ENCODE measurements at regions of chr10 and their contacts with region 1.

Region 1: GRCh38 chr10:8331883-8332729 is 277.6 kb downstream of the GATA3 start:
- DNase-seq: peak; percentile 41
- ATAC-seq: peak; percentile 62
- H3K4me3 ChIP-seq: peak overlapping the region; percentile 58
- H3K27ac ChIP-seq: no peak overlapping the region
- H3K4me1 ChIP-seq: no peaks in the 10 kb centered on the region
- H3K27me3 ChIP-seq: peaks cover 23% of the 10 kb centered on the region
- CTCF ChIP-seq: no peak

Region 2: GRCh38 chr10:8350351-8350967 is 18.4 kb after region 1 on chr10:
- CTCF ChIA-PET with region 1: interaction called, 10 read pairs
- POLR2A ChIA-PET with region 1: no interaction called
- intact Hi-C with region 1: no loop called
- DNase-seq: peak; percentile 2
- ATAC-seq: no peak
- H3K4me3 ChIP-seq: no peak overlapping the region
- H3K27ac ChIP-seq: no peak overlapping the region
- H3K4me1 ChIP-seq: no peaks in the 10 kb centered on the region
- H3K27me3 ChIP-seq: no peaks in the 10 kb centered on the region
- CTCF ChIP-seq: no peak

Region 3: GRCh38 chr10:8473205-8473604 is 141.1 kb after region 1 on chr10:
- CTCF ChIA-PET with region 1: no interaction called
- POLR2A ChIA-PET with region 1: no interaction called
- intact Hi-C with region 1: loop called (anchors 10 kb)
- DNase-seq: peak; percentile 34
- ATAC-seq: no peak
- H3K4me3 ChIP-seq: no peak overlapping the region
- H3K27ac ChIP-seq: no peak overlapping the region
- H3K4me1 ChIP-seq: no peaks in the 10 kb centered on the region
- H3K27me3 ChIP-seq: no peaks in the 10 kb centered on the region
- CTCF ChIP-seq: peak; percentile 50

Region 4: GRCh38 chr10:8513155-8514147 is 181.3 kb after region 1 on chr10:
- CTCF ChIA-PET with region 1: no interaction called
- POLR2A ChIA-PET with region 1: no interaction called
- intact Hi-C with region 1: no loop called
- DNase-seq: no peak
- ATAC-seq: no peak
- H3K4me3 ChIP-seq: no peak overlapping the region
- H3K27ac ChIP-seq: no peak overlapping the region
- H3K4me1 ChIP-seq: no peaks in the 10 kb centered on the region
- H3K27me3 ChIP-seq: peaks cover 48% of the 10 kb centered on the region
- CTCF ChIP-seq: 0 out of 2 replicates have a peak, but pooled peaks have one; percentile 16